ENCODE measurements at regions of chr3 and their contacts with region 1.

Region 1: DNA sequence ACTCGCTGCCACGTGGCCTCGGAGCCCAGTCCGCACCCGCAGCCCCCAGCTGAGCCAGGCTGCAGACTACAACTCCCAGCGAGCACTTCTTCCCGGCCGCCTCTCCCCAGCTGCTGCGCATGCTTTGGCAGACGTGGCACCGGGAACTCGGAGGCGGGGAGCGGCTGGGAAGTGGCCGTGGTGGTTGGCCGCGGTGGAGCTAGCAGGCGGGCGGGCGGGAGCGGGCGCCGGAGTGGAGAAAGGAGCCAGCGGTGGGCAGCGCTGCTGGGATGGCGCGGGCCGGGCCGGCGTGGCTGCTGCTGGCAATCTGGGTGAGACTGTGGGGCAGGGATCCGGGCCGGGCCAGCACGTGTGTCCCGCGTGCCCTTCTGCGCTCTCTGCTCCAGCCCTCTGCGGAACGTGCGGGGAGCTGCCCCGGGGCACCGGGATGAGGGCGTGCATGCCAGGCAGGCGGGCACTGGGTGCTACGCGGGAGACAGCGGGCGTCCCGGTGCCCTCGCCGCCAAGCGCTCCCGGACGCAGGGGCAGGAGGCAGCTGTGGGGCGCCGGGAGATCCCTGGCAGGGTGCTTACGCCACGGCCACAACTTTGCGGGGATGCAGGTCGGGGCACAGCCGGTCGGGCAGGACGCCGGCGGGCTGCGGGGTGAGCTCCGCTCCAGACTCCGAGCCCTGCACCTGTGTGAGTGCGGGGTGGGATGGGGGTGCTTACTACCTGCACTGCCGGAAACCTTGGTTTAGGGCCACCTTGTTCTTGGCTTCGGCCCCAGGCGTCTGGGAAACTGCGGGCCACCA is at the start of gene PDIA5:
- DNase-seq: peak; percentile 34
- ATAC-seq: peak; percentile 93
- H3K4me3 ChIP-seq: peak within 1 kb of the TSS; percentile 80
- H3K27ac ChIP-seq: 0 out of 2 replicates have a peak within 1 kb of the TSS, but pooled peaks have one; percentile 25
- H3K4me1 ChIP-seq: peaks cover 4% of the 10 kb centered on the region
- H3K27me3 ChIP-seq: no peaks in the 10 kb centered on the region; a peak in 1 of 4 replicates
- CTCF ChIP-seq: no peak
- EP300 ChIP-seq: no peak
- POLR2A ChIP-seq: peak; percentile 74
- RAD21 ChIP-seq: no peak
- polyA plus RNA-seq, gene PDIA5: 4.1 to 5.2 TPM

Region 2: GRCh38 chr3:122793568-122794416 is 273.3 kb before region 1 on chr3 and contains the start of gene HSPBAP1:
- CTCF ChIA-PET with region 1: no interaction called
- POLR2A ChIA-PET with region 1: no interaction called
- RAD21 ChIA-PET with region 1: no interaction called
- SMC1A ChIA-PET with region 1: no interaction called
- in situ Hi-C with region 1: no loop called
- intact Hi-C with region 1: no loop called
- DNase-seq: peak; percentile 68
- ATAC-seq: peak; percentile 76
- H3K4me3 ChIP-seq: peak within 1 kb of the TSS; percentile 77
- H3K27ac ChIP-seq: peak within 1 kb of the TSS; percentile 47
- H3K4me1 ChIP-seq: no peaks in the 10 kb centered on the region
- H3K27me3 ChIP-seq: no peaks in the 10 kb centered on the region
- CTCF ChIP-seq: no peak
- EP300 ChIP-seq: peak in 1 of 2 experiments; percentile 44; a peak in 1 of 4 replicates
- POLR2A ChIP-seq: peak; percentile 83
- RAD21 ChIP-seq: no peak
- polyA plus RNA-seq, gene HSPBAP1: 3.2 to 3.5 TPM

Region 3: GRCh38 chr3:123081718-123082369 is 14.8 kb after region 1 on chr3:
- CTCF ChIA-PET with region 1: interaction called, 10 read pairs
- POLR2A ChIA-PET with region 1: interaction called, 8 read pairs
- RAD21 ChIA-PET with region 1: interaction called, 5 read pairs
- SMC1A ChIA-PET with region 1: interaction called, 12 read pairs
- in situ Hi-C with region 1: no loop called
- intact Hi-C with region 1: no loop called
- DNase-seq: no peak
- ATAC-seq: peak; percentile 28
- H3K4me3 ChIP-seq: 0 out of 2 replicates have a peak overlapping the region, but pooled peaks have one; percentile 24
- H3K27ac ChIP-seq: peak overlapping the region; percentile 71
- H3K4me1 ChIP-seq: peaks cover 22% of the 10 kb centered on the region
- H3K27me3 ChIP-seq: no peaks in the 10 kb centered on the region
- CTCF ChIP-seq: no peak
- EP300 ChIP-seq: no peak
- POLR2A ChIP-seq: no peak
- RAD21 ChIP-seq: no peak

Region 4: GRCh38 chr3:123272547-123272946 is 205.5 kb after region 1 on chr3:
- CTCF ChIA-PET with region 1: no interaction called
- POLR2A ChIA-PET with region 1: no interaction called
- RAD21 ChIA-PET with region 1: no interaction called
- SMC1A ChIA-PET with region 1: no interaction called
- in situ Hi-C with region 1: no loop called
- intact Hi-C with region 1: no loop called
- DNase-seq: no peak
- ATAC-seq: no peak
- H3K4me3 ChIP-seq: no peak overlapping the region
- H3K27ac ChIP-seq: no peak overlapping the region
- H3K4me1 ChIP-seq: no peaks in the 10 kb centered on the region
- H3K27me3 ChIP-seq: no peaks in the 10 kb centered on the region
- CTCF ChIP-seq: no peak
- EP300 ChIP-seq: no peak
- POLR2A ChIP-seq: no peak
- RAD21 ChIP-seq: no peak

Region 5: GRCh38 chr3:123559040-123559861 is 492.2 kb after region 1 on chr3:
- CTCF ChIA-PET with region 1: no interaction called
- POLR2A ChIA-PET with region 1: no interaction called
- RAD21 ChIA-PET with region 1: no interaction called
- SMC1A ChIA-PET with region 1: no interaction called
- in situ Hi-C with region 1: no loop called
- intact Hi-C with region 1: no loop called
- DNase-seq: no peak
- ATAC-seq: peak; percentile 60
- H3K4me3 ChIP-seq: no peak overlapping the region
- H3K27ac ChIP-seq: no peak overlapping the region
- H3K4me1 ChIP-seq: no peaks in the 10 kb centered on the region
- H3K27me3 ChIP-seq: no peaks in the 10 kb centered on the region
- CTCF ChIP-seq: peak; percentile 63 to 78 (median 70); a peak in 5 of 6 replicates
- EP300 ChIP-seq: no peak
- POLR2A ChIP-seq: no peak
- RAD21 ChIP-seq: peak; percentile 83

Measured in GM12878 (cell line).